ENCODE measurements at regions of chr12 and their contacts with region 1.

Region 1: DNA sequence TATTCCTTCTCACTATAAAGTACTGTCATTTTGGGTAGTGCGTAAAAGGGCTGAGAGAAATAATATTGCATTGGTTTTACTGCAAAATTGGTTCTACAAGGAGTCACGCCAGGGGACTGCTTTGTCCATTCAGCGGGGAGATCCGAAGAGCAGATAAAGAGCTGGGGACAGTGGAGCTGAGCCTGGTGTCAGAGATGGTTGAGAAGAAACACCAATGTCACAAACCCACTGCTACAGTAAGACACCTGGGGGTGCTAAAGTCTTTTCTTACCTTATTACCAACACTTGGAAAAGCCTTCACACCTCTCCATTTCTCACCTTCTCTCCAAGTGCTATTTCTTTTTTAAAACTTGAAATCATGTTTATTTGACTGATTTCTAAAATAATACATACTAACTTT is 14.1 kb downstream of the IL31 start:
- DNase-seq: no peak
- H3K4me3 Mint-ChIP-seq: no peak overlapping the region
- H3K27ac Mint-ChIP-seq: no peak overlapping the region
- H3K4me1 Mint-ChIP-seq: peaks cover 2% of the 10 kb centered on the region
- H3K27me3 Mint-ChIP-seq: no peaks in the 10 kb centered on the region

Region 2: GRCh38 chr12:122190842-122191668 is 31.2 kb after region 1 on chr12:
- CTCF ChIA-PET with region 1: interaction called, 5 read pairs
- intact Hi-C with region 1: loop called (anchors 1 kb)
- DNase-seq: peak; percentile 82
- H3K4me3 Mint-ChIP-seq: no peak overlapping the region
- H3K27ac Mint-ChIP-seq: no peak overlapping the region
- H3K4me1 Mint-ChIP-seq: no peaks in the 10 kb centered on the region
- H3K27me3 Mint-ChIP-seq: peaks cover 3% of the 10 kb centered on the region